ENCODE measurements at regions of chr7 and their contacts with region 1.

Region 1: DNA sequence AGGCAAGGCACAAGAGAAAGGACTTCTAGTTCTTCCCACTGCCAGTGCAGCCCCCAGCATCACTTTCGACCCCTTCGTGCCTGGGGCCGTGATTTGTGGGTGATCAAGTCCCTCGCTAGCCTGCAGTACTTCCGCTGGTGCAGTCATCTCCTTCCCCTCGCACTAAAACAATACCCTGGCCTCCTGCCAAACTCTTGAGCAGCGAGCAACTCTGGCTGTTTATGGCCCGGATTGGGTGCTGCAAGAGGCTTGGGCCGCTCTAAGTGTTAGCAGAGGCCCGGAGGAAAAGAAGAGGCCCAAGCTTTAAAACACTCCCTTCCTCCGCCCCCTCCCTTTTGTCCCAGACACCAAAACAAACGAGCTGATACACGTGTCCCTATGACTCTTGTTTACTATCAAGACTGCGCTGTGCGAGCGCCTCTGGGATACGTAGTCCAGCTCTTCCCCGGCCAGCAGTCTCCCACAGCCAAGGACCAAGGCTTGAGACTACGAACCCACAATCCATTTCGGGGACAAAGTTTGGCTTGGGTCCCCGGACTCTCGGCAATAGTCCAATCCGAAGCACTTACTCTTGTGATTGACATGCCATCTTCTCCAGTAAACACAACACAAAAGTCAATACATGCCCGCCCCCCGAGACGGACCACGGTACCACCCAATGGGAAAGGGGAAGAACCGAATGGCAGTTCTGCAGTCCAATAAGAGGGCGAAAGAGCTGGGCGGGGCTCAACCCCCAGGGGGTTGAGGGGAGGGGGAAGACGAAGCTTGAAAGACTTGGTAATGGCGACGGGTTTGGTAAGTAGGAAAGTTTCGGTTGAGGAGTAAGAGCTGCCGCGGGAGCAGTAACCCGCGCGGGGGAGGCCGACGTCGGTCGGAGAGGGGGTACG is at the start of gene HBP1:
- DNase-seq: peak; percentile 100
- H3K4me3 ChIP-seq: peak within 1 kb of the TSS; percentile 81 to 94
- H3K27ac ChIP-seq: peak within 1 kb of the TSS; percentile 94 to 100
- H3K4me1 ChIP-seq: peaks cover 2 to 23% of the 10 kb centered on the region in 2 donors
- H3K27me3 ChIP-seq: no peaks in the 10 kb centered on the region
- CTCF ChIP-seq: no peak
- total RNA-seq, gene HBP1: 62.2 TPM

Region 2: GRCh38 chr7:105876091-105876963 is 1292.1 kb before region 1 on chr7 and contains the start of gene ATXN7L1:
- intact Hi-C with region 1: loop called (anchors 5 kb)
- DNase-seq: peak; percentile 84 to 96
- H3K4me3 ChIP-seq: peak within 1 kb of the TSS; percentile 76 to 99
- H3K27ac ChIP-seq: peak within 1 kb of the TSS; percentile 58 to 76
- H3K4me1 ChIP-seq: peaks cover 3 to 4% of the 10 kb centered on the region in 2 donors
- H3K27me3 ChIP-seq: no peaks in the 10 kb centered on the region
- CTCF ChIP-seq: peak; percentile 28 to 89 (median 52)
- total RNA-seq, gene ATXN7L1: 7.5 TPM

Region 3: GRCh38 chr7:107044347-107045194 is 123.9 kb before region 1 on chr7 and contains the start of gene PRKAR2B:
- intact Hi-C with region 1: loop called (anchors 2 kb)
- DNase-seq: peak in 1 of 2 donors; percentile 77
- H3K4me3 ChIP-seq: peak within 1 kb of the TSS; percentile 66 to 74
- H3K27ac ChIP-seq: peak within 1 kb of the TSS; percentile 62
- H3K4me1 ChIP-seq: peaks cover 7% of the 10 kb centered on the region in 2 donors
- H3K27me3 ChIP-seq: no peaks in the 10 kb centered on the region
- CTCF ChIP-seq: no peak
- total RNA-seq, gene PRKAR2B: 10.5 TPM

Region 4: GRCh38 chr7:107122486-107122911 is 46.0 kb before region 1 on chr7:
- intact Hi-C with region 1: no loop called
- DNase-seq: no peak
- H3K4me3 ChIP-seq: no peak overlapping the region
- H3K27ac ChIP-seq: no peak overlapping the region
- H3K4me1 ChIP-seq: no peaks in the 10 kb centered on the region
- H3K27me3 ChIP-seq: no peaks in the 10 kb centered on the region
- CTCF ChIP-seq: no peak

Region 5: GRCh38 chr7:107208024-107208521 is 39.6 kb after region 1 on chr7:
- intact Hi-C with region 1: no loop called
- DNase-seq: no peak
- H3K4me3 ChIP-seq: no peak overlapping the region
- H3K27ac ChIP-seq: peak overlapping the region; percentile 57 to 67
- H3K4me1 ChIP-seq: peaks cover 4 to 13% of the 10 kb centered on the region in 2 donors
- H3K27me3 ChIP-seq: no peaks in the 10 kb centered on the region
- CTCF ChIP-seq: no peak

Region 6: GRCh38 chr7:107579885-107580715 is 411.6 kb after region 1 on chr7 and contains the start of gene BCAP29:
- intact Hi-C with region 1: loop called (anchors 5 kb)
- DNase-seq: peak; percentile 19 to 89
- H3K4me3 ChIP-seq: peak within 1 kb of the TSS; percentile 84 to 91
- H3K27ac ChIP-seq: peak within 1 kb of the TSS; percentile 93 to 97
- H3K4me1 ChIP-seq: peaks cover 0 to 11% of the 10 kb centered on the region in 2 donors
- H3K27me3 ChIP-seq: no peaks in the 10 kb centered on the region
- CTCF ChIP-seq: peak; percentile 22 to 50 (median 29)
- total RNA-seq, gene BCAP29: 73.2 TPM

Region 7: GRCh38 chr7:108525985-108526767 is 1357.7 kb after region 1 on chr7 and contains the start of gene PNPLA8:
- intact Hi-C with region 1: loop called (anchors 2 kb)
- DNase-seq: peak; percentile 99 to 100
- H3K4me3 ChIP-seq: peak within 1 kb of the TSS; percentile 68 to 88
- H3K27ac ChIP-seq: peak within 1 kb of the TSS; percentile 98 to 99
- H3K4me1 ChIP-seq: peaks cover 0 to 15% of the 10 kb centered on the region in 2 donors
- H3K27me3 ChIP-seq: no peaks in the 10 kb centered on the region
- CTCF ChIP-seq: peak in 1 of 3 experiments; percentile 11
- total RNA-seq, gene PNPLA8: 4.4 TPM